Psoas muscle (tissue), 8 donors: ENCODE measurements at regions of chr2 and their contacts with region 1.

Region 1: GRCh38 chr2:6968319-6969100 is 51.3 kb downstream of the RNF144A start:
- DNase-seq: peak in 1 of 2 donors; percentile 74
- ATAC-seq: peak; percentile 91 to 94 (median 94)
- H3K4me3 ChIP-seq: no peak overlapping the region
- H3K27ac ChIP-seq: no peak overlapping the region
- H3K4me1 ChIP-seq: peaks cover 29% of the 10 kb centered on the region
- H3K27me3 ChIP-seq: no peaks in the 10 kb centered on the region
- CTCF ChIP-seq: no peak

Region 2: GRCh38 chr2:6922201-6922685 is 46.3 kb before region 1 on chr2:
- intact Hi-C with region 1: loop called in 1 of 2 experiments (anchors 5 kb)
- DNase-seq: no peak
- ATAC-seq: no peak
- H3K4me3 ChIP-seq: no peak overlapping the region
- H3K27ac ChIP-seq: no peak overlapping the region
- H3K4me1 ChIP-seq: peaks cover 60% of the 10 kb centered on the region
- H3K27me3 ChIP-seq: no peaks in the 10 kb centered on the region
- CTCF ChIP-seq: no peak

Region 3: DNA sequence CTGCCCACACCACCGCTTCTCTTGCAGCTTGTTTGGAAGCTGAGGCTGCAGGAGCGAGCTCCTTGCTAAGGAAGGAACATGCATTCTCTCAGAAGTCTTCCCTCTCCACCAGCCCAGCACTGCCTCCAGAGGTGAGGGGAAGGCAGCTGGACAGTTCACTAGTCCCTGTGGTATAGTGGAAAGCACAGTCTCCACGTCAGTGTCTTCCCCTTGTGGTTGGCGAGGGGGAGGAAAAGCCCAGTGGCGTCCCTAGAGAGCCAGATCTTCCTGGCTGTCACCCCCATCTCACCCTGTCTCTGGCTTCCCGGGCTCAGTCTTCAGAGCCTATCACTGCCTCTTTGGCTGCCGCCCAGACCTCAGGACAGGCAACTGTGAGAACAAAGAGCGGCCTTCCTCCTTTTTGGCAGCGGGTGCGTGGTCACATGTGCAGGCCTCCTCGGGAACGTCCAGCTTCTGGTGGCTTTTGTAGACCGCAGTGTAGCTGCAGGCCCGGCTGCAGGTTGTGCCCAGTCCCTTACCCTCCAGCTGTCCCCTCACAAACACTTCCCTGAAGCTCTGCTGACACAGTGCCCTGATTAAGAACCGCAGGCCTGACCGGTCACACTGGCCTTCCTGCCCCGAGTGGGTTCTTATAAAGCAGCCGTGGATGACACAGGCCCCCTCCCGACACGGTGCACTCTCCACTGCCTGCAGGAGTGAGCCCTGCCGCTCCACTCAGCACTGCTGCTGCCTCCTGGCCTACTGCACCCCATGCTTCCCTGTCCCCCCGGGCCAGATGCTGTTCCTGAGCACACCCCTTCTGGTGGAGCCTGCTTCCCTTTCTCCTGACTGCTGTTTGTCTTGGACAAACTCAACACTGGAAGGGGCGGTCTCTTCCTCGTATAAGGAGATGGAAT is 39.6 kb after region 1 on chr2:
- intact Hi-C with region 1: loop called in 1 of 2 experiments (anchors 5 kb)
- DNase-seq: peak; percentile 94 to 95
- ATAC-seq: peak; percentile 88 to 91 (median 88)
- H3K4me3 ChIP-seq: peak overlapping the region; percentile 22
- H3K27ac ChIP-seq: peak overlapping the region; percentile 90
- H3K4me1 ChIP-seq: peaks cover 75% of the 10 kb centered on the region
- H3K27me3 ChIP-seq: no peaks in the 10 kb centered on the region
- CTCF ChIP-seq: peak; percentile 55

Region 4: DNA sequence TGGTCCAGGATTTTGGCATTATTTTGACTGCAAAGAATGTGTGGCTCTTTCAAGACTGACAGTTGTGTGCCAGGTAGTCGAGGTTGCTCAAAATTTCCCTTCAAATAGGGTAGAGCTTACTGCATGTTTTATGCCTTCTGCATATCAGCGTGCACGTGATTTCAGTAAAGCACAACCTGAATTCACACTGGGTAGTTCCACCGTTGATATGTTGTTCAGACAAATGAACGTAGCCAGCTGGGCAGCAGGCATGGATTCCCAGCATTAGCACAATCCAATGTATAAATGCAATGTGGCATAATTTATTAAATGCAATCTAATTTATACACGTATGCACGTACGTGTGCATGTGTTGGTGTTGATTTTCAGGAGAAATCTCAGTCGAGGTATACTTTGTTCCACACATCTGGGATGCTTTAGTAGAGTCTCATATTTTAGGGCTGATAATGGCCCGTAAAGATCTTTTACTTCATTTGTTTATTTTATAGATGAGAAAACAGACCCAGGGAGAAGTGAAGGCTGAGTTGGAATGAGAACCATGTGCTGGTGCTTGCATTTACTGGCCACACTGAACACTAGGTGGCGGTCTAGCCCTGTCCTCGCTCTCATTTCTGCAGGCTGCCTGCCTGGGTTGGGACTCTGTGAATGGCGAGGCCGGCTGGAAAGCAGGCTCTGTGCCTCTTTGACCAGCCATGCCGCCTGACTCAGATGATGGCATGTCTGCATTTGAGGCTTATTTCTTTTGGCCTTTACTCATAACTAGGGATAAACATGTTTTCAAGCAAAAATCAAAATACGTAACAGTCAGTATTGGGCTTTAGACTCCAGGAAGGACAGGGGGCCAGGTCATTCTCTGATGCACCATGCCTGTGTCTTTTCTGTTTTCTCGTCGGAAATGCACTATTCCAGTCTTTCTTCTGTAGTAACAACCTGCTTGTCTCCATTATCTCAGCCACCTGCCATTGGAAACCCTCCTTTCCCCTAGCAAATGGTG is 69.1 kb after region 1 on chr2:
- intact Hi-C with region 1: no loop called
- DNase-seq: peak in 1 of 2 donors; percentile 60
- ATAC-seq: peak; percentile 62 to 71 (median 66)
- H3K4me3 ChIP-seq: no peak overlapping the region
- H3K27ac ChIP-seq: no peak overlapping the region
- H3K4me1 ChIP-seq: no peaks in the 10 kb centered on the region
- H3K27me3 ChIP-seq: no peaks in the 10 kb centered on the region
- CTCF ChIP-seq: peak; percentile 60

Region 5: DNA sequence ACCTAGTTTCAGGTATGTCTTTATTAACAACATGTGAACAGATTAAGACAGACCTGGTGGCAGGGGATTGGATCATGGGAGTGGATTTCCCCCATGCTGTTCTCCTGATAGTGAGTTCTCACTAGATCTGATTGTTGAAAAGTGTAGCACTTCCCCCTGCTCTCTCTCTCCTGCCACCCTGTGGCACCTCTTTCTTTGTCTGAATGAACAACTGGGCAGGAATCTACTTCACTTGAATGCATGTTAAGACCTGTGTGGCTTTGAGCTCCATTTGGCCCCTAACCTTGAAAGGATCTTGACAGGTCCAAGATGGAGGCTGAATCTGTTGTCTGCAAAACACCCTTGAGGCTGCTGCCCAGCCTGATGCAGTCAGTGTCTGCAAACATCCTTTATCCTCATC is 143.1 kb after region 1 on chr2:
- intact Hi-C with region 1: no loop called
- DNase-seq: no peak
- ATAC-seq: no peak
- H3K4me3 ChIP-seq: no peak overlapping the region
- H3K27ac ChIP-seq: no peak overlapping the region
- H3K4me1 ChIP-seq: no peaks in the 10 kb centered on the region
- H3K27me3 ChIP-seq: no peaks in the 10 kb centered on the region
- CTCF ChIP-seq: peak; percentile 13